ENCODE measurements at regions of chr17 and their contacts with region 1.

Region 1: DNA sequence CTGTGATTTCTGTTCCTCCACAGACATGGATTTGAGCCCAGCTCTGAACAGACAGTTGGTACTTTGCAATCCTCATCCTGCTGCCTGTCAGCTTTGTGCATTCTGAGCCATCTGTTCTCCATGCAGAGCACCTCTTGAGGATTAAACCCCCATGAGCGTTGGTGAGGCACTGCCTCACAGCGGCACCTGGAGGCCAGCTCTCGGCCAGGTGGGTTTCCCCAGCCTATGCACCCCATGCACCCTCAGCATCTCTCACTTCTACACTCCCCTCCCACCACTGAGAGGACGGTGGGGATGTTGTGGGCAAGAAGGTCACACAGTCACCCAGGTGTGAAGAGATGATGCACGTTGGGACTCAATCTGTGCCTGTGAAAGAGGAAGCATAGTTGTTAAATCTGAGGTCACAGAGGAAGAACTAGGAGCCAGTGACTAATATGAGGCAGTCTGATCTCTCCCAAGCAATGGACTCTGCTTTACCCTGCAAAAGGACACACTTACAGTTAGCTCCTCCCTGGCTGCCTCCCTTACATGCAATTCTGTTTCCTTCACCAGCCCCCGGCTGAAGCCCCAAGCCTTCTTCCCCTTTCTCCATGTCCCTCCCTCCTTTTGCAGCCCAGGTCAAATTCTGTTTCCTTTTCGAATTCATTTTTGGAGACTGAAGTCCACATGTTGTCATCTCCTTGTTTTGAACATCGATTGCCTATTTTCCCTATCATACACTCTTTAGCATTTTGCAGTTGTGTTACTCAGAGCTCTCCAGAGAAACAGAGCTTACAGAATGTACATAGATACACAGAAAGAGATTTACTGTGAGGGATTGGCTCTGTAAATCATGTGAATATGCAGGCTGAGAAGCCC is 58.5 kb downstream of the HS3ST3B1 start:
- DNase-seq: no peak
- H3K4me3 ChIP-seq: no peak overlapping the region
- H3K27ac ChIP-seq: no peak overlapping the region
- H3K4me1 ChIP-seq: no peaks in the 10 kb centered on the region
- H3K27me3 ChIP-seq: no peaks in the 10 kb centered on the region
- CTCF ChIP-seq: no peak
- POLR2A ChIP-seq: no peak

Region 2: GRCh38 chr17:14245020-14245419 is 114.4 kb before region 1 on chr17:
- intact Hi-C with region 1: no loop called
- DNase-seq: no peak
- H3K4me3 ChIP-seq: no peak overlapping the region
- H3K27ac ChIP-seq: no peak overlapping the region
- H3K4me1 ChIP-seq: no peaks in the 10 kb centered on the region
- H3K27me3 ChIP-seq: no peaks in the 10 kb centered on the region
- CTCF ChIP-seq: no peak
- POLR2A ChIP-seq: no peak

Region 3: GRCh38 chr17:14427900-14428647 is 68.7 kb after region 1 on chr17:
- intact Hi-C with region 1: loop called (anchors 10 kb)
- DNase-seq: no peak
- H3K4me3 ChIP-seq: no peak overlapping the region
- H3K27ac ChIP-seq: no peak overlapping the region
- H3K4me1 ChIP-seq: no peaks in the 10 kb centered on the region
- H3K27me3 ChIP-seq: no peaks in the 10 kb centered on the region
- CTCF ChIP-seq: no peak
- POLR2A ChIP-seq: no peak